Mammary epithelial cell (primary cell): ENCODE measurements at regions of chr6 and their contacts with region 1.

Region 1: GRCh38 chr6:18387061-18387721 is at the start of gene RNF144B:
- DNase-seq: peak; percentile 95
- H3K4me3 ChIP-seq: peak within 1 kb of the TSS; percentile 81 to 89 (median 85)
- H3K27ac ChIP-seq: peak within 1 kb of the TSS; percentile 98
- H3K4me1 ChIP-seq: peaks cover 24% of the 10 kb centered on the region
- H3K27me3 ChIP-seq: no peaks in the 10 kb centered on the region
- CTCF ChIP-seq: peak in 1 of 2 donors; percentile 5
- total RNA-seq, gene RNF144B: 45.7 to 74.7 TPM

Region 2: GRCh38 chr6:18242062-18242851 is 144.9 kb before region 1 on chr6:
- CTCF ChIA-PET with region 1: no interaction called
- dilution Hi-C with region 1: no loop called
- in situ Hi-C with region 1: no loop called
- intact Hi-C with region 1: loop called (anchors 2 kb)
- DNase-seq: peak; percentile 90
- H3K4me3 ChIP-seq: no peak overlapping the region
- H3K27ac ChIP-seq: peak overlapping the region; percentile 73
- H3K4me1 ChIP-seq: peaks cover 35% of the 10 kb centered on the region
- H3K27me3 ChIP-seq: no peaks in the 10 kb centered on the region
- CTCF ChIP-seq: no peak

Region 3: GRCh38 chr6:18343741-18344140 is 43.5 kb before region 1 on chr6:
- CTCF ChIA-PET with region 1: no interaction called
- dilution Hi-C with region 1: no loop called
- in situ Hi-C with region 1: no loop called
- intact Hi-C with region 1: loop called (anchors 1 kb)
- DNase-seq: peak; percentile 94
- H3K4me3 ChIP-seq: no peak overlapping the region
- H3K27ac ChIP-seq: peak overlapping the region; percentile 97
- H3K4me1 ChIP-seq: peaks cover 58% of the 10 kb centered on the region
- H3K27me3 ChIP-seq: no peaks in the 10 kb centered on the region
- CTCF ChIP-seq: no peak

Region 4: DNA sequence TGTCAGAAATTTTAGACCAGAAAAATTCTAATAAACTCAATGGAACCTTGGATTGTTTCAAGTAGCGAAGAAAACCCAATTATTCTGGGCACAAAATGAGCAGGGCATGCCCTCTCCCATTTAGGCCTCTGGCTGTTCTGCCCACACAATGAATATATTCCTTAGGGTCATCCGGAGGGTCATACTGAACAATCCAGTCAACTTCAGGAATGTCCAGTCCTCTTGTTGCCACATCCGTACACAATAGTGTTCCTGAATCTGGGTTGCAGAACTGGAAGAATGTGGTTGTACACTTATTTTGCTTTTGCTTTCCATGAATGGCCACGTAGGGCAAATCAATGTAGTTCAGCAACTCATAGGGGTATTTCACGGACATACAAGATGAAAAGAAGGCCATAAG is 23.4 kb before region 1 on chr6:
- CTCF ChIA-PET with region 1: no interaction called
- dilution Hi-C with region 1: no loop called
- in situ Hi-C with region 1: no loop called
- intact Hi-C with region 1: no loop called
- DNase-seq: no peak
- H3K4me3 ChIP-seq: no peak overlapping the region
- H3K27ac ChIP-seq: no peak overlapping the region
- H3K4me1 ChIP-seq: peaks cover 20% of the 10 kb centered on the region
- H3K27me3 ChIP-seq: no peaks in the 10 kb centered on the region
- CTCF ChIP-seq: no peak

Region 5: GRCh38 chr6:18432180-18432579 is 45.0 kb after region 1 on chr6:
- CTCF ChIA-PET with region 1: no interaction called
- dilution Hi-C with region 1: no loop called
- in situ Hi-C with region 1: no loop called
- intact Hi-C with region 1: no loop called
- DNase-seq: peak; percentile 93
- H3K4me3 ChIP-seq: no peak overlapping the region
- H3K27ac ChIP-seq: peak overlapping the region; percentile 76
- H3K4me1 ChIP-seq: peaks cover 47% of the 10 kb centered on the region
- H3K27me3 ChIP-seq: no peaks in the 10 kb centered on the region
- CTCF ChIP-seq: no peak

Region 6: DNA sequence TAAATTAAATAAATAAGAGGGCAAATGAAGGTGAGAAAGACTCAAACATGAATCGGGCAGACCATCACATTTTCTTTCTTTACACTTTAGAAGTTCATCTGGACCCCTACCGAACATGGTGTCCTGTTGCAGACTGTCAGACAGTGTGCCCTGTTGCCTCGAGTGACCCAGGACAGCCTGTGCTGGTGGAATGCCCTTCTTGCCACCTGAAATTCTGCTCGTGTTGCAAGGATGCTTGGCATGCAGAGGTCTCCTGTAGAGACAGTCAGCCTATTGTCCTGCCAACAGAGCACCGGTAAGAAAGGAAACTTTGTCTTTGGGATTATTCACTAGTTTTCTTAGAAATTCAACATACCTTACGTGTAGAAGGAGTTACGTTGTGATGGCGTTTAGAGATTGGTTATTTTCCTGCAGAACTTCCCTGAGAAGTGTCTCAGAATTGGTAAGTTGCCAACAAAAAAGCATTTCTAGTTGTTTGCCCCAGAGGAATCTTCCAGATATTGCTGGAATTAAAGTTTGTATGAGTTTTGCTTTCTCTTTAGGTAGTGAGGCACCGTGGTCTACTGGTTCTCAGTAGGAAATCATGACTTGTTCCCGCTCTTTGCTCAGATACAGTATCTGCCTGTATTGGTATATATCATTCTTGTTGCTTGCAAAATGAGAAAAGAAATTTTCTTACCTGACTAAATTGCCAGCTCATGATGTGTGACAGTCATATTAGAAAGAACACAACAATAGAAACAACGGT is 70.0 kb after region 1 on chr6:
- CTCF ChIA-PET with region 1: no interaction called
- dilution Hi-C with region 1: no loop called
- in situ Hi-C with region 1: no loop called
- intact Hi-C with region 1: loop called (anchors 5 kb)
- DNase-seq: peak; percentile 66
- H3K4me3 ChIP-seq: peak overlapping the region in 1 of 3 experiments; percentile 1
- H3K27ac ChIP-seq: peak overlapping the region; percentile 62
- H3K4me1 ChIP-seq: peaks cover 22% of the 10 kb centered on the region
- H3K27me3 ChIP-seq: no peaks in the 10 kb centered on the region
- CTCF ChIP-seq: no peak

Region 7: DNA sequence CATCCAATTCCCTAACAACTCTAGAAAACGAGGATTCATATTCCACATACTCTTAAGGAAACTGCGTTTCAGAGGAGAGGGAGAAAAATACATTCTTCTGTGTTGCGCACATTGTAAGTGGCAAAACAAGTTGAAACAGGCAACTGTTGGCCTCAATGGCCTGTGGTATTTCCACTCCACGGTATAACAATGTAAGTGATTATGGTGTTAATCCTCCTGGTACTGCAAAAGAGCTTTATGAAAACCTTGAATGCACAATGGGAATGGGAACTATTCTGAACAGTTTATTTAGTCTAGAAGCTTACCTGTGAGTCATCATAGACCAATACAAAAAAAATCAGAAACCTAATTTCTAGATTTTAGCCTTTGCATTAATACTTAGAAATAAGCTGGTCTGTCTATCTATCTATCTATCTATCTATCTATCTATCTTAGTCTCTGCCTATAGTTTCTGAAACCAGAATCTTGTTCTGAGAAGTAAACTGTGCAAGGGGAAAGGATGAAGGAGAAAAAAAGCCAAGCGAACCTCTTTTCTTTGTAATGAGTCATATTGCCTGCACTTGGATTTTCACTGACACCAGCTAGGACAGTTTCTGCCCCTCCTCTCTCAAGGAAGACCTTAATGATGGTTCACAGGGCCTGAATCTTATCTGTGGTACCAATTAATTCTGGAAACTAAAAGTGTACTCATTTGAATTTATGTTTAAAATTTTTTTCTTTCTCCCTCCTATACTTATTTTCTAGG is 101.5 kb after region 1 on chr6:
- CTCF ChIA-PET with region 1: no interaction called
- dilution Hi-C with region 1: loop called (anchors 25 kb)
- in situ Hi-C with region 1: no loop called
- intact Hi-C with region 1: loop called (anchors 5 kb)
- DNase-seq: peak; percentile 93
- H3K4me3 ChIP-seq: peak overlapping the region in 1 of 3 experiments; percentile 21
- H3K27ac ChIP-seq: peak overlapping the region; percentile 91
- H3K4me1 ChIP-seq: peaks cover 23% of the 10 kb centered on the region
- H3K27me3 ChIP-seq: no peaks in the 10 kb centered on the region
- CTCF ChIP-seq: no peak